ENCODE measurements at regions of chr5 and their contacts with region 1.

Region 1: GRCh38 chr5:6765612-6766525 is 52.6 kb downstream of the TENT4A start:
- DNase-seq: peak; percentile 68 to 95
- H3K4me3 ChIP-seq: no peak overlapping the region; the same call in 1 of the 2 replicates
- H3K27ac ChIP-seq: peak overlapping the region; percentile 53
- H3K4me1 ChIP-seq: peaks cover 29% of the 10 kb centered on the region
- H3K27me3 ChIP-seq: no peaks in the 10 kb centered on the region
- CTCF ChIP-seq: peak; percentile 99

Region 2: DNA sequence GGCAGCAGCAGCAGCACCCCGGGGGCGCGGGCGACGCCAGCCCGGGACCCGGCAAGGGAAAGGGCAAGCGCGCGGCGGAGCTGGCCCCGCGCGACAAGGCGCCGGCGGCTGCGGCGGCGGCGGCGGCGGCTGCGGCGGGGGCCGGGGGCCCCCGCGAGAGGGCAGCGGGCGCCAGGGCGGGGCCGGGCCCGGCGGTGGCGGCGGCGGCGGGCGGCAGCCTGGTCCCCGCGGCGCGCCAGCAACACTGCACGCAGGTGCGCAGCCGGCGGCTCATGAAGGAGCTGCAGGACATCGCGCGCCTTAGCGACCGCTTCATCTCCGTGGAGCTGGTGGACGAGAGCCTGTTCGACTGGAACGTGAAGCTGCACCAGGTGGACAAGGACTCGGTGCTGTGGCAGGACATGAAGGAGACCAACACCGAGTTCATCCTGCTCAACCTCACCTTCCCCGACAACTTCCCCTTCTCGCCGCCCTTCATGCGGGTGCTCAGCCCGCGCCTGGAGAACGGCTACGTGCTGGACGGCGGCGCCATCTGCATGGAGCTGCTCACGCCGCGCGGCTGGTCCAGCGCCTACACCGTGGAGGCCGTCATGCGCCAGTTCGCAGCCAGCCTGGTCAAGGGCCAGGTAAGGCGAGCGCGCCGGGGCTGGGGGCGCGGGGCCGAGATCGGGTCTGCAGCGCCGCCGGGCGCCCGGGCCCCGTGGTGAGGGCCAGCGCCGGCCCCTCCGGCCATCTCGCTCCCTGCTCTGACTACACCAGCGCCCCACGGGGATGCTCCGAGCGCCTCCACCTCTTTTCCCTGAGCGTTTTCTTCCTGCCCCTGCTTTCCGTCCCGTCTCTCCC is 317.0 kb before region 1 on chr5 and contains the start of gene UBE2QL1:
- CTCF ChIA-PET with region 1: no interaction called
- POLR2A ChIA-PET with region 1: no interaction called
- intact Hi-C with region 1: no loop called
- DNase-seq: no peak
- H3K4me3 ChIP-seq: no peak within 1 kb of the TSS
- H3K27ac ChIP-seq: no peak within 1 kb of the TSS
- H3K4me1 ChIP-seq: no peaks in the 10 kb centered on the region
- H3K27me3 ChIP-seq: peaks cover 51% of the 10 kb centered on the region
- CTCF ChIP-seq: no peak
- total RNA-seq, gene UBE2QL1: not detected in 2 replicates

Region 3: DNA sequence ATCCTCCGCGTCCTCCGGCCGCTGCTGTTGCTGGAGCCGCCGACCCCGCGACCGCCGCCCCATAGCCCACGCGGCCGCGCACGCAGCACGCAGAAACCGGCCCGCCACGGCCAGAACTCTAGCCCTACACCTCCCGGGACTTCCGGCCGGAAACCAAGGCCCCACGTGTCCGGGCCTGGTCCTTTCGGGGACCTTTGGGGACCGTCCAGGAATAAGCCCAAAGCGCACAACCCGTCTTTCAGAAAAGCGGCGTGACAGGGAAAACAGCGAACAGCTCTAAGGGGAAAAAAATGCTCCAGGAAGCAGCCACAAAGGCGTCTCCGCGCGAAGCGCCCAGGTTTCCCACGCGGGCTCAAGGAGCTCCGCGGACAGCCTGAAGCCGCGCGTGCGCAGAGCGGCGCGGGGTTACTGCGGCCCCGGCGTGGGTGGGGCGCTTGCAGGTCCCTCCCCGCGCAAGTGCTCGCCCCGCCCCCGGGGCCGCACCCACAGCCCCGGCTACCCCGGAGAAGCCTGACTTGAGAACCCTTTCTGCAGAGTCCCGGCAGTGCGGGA is 132.9 kb before region 1 on chr5 and contains the starts of genes NSUN2 and SRD5A1:
- CTCF ChIA-PET with region 1: no interaction called
- POLR2A ChIA-PET with region 1: no interaction called
- intact Hi-C with region 1: loop called (anchors 1 kb)
- DNase-seq: peak; percentile 79 to 99
- H3K4me3 ChIP-seq: peak within 1 kb of the TSS; percentile 72
- H3K27ac ChIP-seq: peak within 1 kb of the TSS; percentile 83
- H3K4me1 ChIP-seq: peaks cover 22% of the 10 kb centered on the region
- H3K27me3 ChIP-seq: no peaks in the 10 kb centered on the region
- CTCF ChIP-seq: no peak
- total RNA-seq, gene NSUN2: 148 and 155 TPM in 2 replicates
- total RNA-seq, gene SRD5A1: 52.3 and 56.7 TPM in 2 replicates

Region 4: DNA sequence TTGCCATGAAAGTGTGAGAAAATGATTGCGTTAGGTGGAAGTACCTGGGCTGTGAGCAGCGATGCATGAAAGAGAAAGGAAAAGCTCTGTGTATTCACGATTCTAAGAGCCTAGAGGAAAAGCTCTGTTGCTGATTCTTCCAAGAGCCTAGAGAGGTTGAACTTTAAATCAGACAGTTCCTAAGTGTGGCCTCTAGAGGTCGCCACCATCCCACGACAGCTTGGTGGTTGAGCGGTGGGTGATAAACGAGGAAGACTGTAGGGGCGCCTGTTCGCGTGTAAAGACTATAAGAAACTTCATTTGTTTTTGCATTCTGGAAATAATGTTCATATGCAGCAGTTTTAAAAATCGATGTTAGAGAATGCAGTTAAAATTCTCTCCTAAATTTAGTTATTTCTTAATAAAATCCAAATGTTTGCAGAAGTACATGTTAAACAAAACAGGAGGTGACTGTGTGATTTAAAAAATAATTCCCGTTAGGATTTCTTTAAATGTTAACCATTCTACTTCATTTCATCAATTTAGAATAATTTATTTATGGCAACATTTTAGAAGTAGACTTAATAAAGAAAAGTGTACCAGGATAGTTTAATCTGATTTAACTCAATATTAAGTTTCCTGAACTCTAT is 55.1 kb after region 1 on chr5:
- CTCF ChIA-PET with region 1: interaction called, 3 read pairs
- POLR2A ChIA-PET with region 1: no interaction called
- intact Hi-C with region 1: loop called (anchors 5 kb)
- DNase-seq: peak; percentile 43 to 47
- H3K4me3 ChIP-seq: no peak overlapping the region
- H3K27ac ChIP-seq: no peak overlapping the region
- H3K4me1 ChIP-seq: no peaks in the 10 kb centered on the region
- H3K27me3 ChIP-seq: peaks cover 86% of the 10 kb centered on the region
- CTCF ChIP-seq: peak; percentile 97

Region 5: DNA sequence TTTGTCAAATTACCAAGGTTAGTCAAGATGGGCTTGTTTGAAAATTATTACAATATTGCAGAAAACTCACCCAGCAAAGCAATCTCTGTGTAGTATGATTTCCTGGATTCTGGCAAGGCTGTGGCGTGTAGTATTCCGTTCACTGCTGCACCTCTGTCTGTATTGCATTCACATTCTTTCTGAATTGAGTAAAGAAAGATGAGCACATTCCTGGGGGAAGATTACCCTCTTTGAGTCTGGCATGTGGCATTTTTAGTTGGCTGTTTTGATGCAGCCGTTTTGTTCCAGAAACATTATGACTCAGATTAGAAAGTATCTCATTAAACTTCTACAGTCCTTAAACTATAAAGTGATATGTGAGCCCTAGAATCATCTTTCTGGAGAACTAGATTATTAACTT is 145.1 kb after region 1 on chr5:
- CTCF ChIA-PET with region 1: no interaction called
- POLR2A ChIA-PET with region 1: no interaction called
- intact Hi-C with region 1: loop called (anchors 10 kb)
- DNase-seq: no peak
- H3K4me3 ChIP-seq: no peak overlapping the region
- H3K27ac ChIP-seq: no peak overlapping the region
- H3K4me1 ChIP-seq: no peaks in the 10 kb centered on the region
- H3K27me3 ChIP-seq: peaks cover 76% of the 10 kb centered on the region
- CTCF ChIP-seq: no peak

Region 6: DNA sequence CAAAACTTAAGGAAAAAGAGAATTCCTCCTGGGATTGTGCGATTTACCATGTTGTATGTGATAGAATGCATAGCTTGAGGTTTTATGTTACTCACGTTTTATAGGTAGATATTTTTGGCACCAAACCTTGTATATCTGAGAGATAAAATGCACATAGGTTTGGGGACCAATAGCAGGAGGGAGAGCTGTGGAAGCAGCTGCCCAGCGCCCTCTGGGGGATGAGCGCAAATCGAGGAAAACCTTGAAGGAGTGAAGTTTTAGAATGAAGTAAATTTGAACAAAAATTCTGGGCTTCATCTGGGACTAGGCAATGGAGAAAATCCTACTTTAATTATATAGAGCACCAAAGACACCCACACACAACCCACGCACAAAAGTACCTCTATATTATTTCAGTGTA is 827.0 kb after region 1 on chr5:
- CTCF ChIA-PET with region 1: no interaction called
- POLR2A ChIA-PET with region 1: no interaction called
- intact Hi-C with region 1: loop called (anchors 2 kb)
- DNase-seq: no peak
- H3K4me3 ChIP-seq: no peak overlapping the region
- H3K27ac ChIP-seq: no peak overlapping the region
- H3K4me1 ChIP-seq: no peaks in the 10 kb centered on the region
- H3K27me3 ChIP-seq: peaks cover 13% of the 10 kb centered on the region; the same call in 1 of the 2 replicates
- CTCF ChIP-seq: peak; percentile 54; the same call in 1 of the 2 replicates

Region 7: GRCh38 chr5:7754992-7755596 is 989.2 kb after region 1 on chr5:
- CTCF ChIA-PET with region 1: interaction called, 10 read pairs
- POLR2A ChIA-PET with region 1: no interaction called
- intact Hi-C with region 1: loop called (anchors 2 kb)
- DNase-seq: peak; percentile 55 to 75
- H3K4me3 ChIP-seq: no peak overlapping the region
- H3K27ac ChIP-seq: no peak overlapping the region
- H3K4me1 ChIP-seq: no peaks in the 10 kb centered on the region
- H3K27me3 ChIP-seq: peaks cover 89% of the 10 kb centered on the region
- CTCF ChIP-seq: peak; percentile 88

Region 8: DNA sequence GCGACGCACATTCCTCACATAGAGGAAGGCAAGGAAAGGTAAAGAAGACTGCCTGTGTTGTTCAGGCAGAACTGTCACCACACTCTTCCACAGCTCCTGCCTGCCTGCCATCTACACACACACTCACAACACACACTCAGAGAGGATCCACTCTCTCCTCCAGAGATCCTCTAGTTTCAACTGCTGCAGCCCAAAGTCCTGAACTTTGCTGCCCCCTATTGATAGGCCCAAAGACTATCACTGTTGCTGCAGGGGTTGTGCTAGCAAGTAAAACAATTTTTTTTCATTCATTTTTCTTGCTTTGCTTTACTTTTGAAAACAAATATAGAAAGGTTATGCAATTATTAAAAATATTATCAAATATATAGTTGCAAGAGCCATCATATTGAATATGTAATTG is 1091.0 kb after region 1 on chr5:
- CTCF ChIA-PET with region 1: no interaction called
- POLR2A ChIA-PET with region 1: no interaction called
- intact Hi-C with region 1: loop called (anchors 5 kb)
- DNase-seq: peak in 1 of 2 experiments; percentile 25
- H3K4me3 ChIP-seq: no peak overlapping the region
- H3K27ac ChIP-seq: no peak overlapping the region
- H3K4me1 ChIP-seq: 0 out of 2 replicates have a peak, but pooled peaks cover 6% of the 10 kb centered on the region
- H3K27me3 ChIP-seq: peaks cover 12% of the 10 kb centered on the region; the same call in 1 of the 2 replicates
- CTCF ChIP-seq: peak; percentile 68

Region 9: DNA sequence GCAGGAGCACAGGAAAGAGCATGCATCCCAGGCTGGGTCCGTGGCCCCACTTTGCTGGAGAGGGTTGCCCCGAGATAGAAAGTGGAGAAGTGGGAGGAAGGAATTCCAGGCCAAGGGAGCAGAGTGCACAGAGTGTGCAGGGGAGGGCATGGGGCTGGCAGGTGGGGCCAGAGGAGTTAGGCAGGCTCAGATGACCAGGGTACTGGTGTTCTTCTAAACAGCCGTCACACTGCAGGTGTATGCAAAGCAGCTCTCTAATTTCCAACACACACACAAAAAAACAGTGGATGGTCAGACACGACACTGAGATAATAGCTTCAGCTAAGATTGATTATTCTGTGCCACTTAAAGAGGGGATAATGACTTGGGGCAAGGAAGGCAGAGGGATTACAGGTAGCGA is 1315.3 kb after region 1 on chr5:
- CTCF ChIA-PET with region 1: no interaction called
- POLR2A ChIA-PET with region 1: no interaction called
- intact Hi-C with region 1: no loop called
- DNase-seq: no peak
- H3K4me3 ChIP-seq: no peak overlapping the region
- H3K27ac ChIP-seq: no peak overlapping the region
- H3K4me1 ChIP-seq: no peaks in the 10 kb centered on the region
- H3K27me3 ChIP-seq: peaks cover 24% of the 10 kb centered on the region
- CTCF ChIP-seq: no peak